Activated CD4-positive, alpha-beta memory T cell treated with anti-CD3 and anti-CD28 coated beads for 36 hours (primary cell): ENCODE measurements at regions of chr9 and their contacts with region 1.

Region 1: DNA sequence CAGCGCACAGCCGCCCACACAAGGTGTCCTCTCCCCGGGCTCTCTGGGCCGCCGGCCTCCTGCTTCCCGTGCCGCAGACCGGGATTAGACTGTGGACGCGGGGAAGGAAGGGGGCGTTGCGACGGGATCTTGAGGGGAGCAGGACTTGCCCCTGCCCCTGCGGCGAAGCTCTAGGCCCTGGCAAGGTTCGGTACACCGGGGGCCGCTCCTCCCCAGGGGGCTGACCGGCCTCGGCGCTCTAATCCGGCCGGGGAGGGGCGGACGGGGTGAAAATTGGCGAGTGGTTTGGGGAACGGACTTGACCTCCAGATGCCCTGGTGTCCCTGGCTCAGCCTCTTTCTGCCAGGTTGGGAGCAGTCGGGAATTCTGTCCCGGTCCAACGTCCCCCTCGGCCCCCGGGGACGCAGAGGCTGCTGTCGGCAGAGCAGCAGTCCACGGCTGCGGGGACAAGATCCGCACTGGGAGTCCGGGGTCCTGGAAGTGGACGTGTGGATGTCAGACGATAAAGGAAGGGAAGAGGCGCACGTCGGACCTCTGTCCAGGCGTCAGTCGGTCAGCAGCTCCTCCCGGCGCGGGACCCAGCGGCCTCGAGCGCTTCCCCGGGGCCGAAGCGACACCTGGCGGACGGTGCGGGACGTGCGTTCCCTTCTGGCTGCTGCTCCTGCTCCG is 1.9 kb upstream of the CNTFR start:
- DNase-seq: peak; percentile 86
- H3K4me3 Mint-ChIP-seq: peak overlapping the region; percentile 53
- H3K27ac Mint-ChIP-seq: no peak overlapping the region
- H3K4me1 Mint-ChIP-seq: peaks cover 25% of the 10 kb centered on the region
- H3K27me3 Mint-ChIP-seq: peaks cover 60% of the 10 kb centered on the region

Region 2: GRCh38 chr9:34267660-34268059 is 323.7 kb before region 1 on chr9:
- CTCF ChIA-PET with region 1: no interaction called
- POLR2A ChIA-PET with region 1: no interaction called
- intact Hi-C with region 1: no loop called
- DNase-seq: no peak
- H3K4me3 Mint-ChIP-seq: no peak overlapping the region
- H3K27ac Mint-ChIP-seq: no peak overlapping the region
- H3K4me1 Mint-ChIP-seq: no peaks in the 10 kb centered on the region
- H3K27me3 Mint-ChIP-seq: no peaks in the 10 kb centered on the region

Region 3: GRCh38 chr9:34522971-34523797 is 68.2 kb before region 1 on chr9 and contains the start of gene ENHO:
- CTCF ChIA-PET with region 1: interaction called, 6 read pairs
- POLR2A ChIA-PET with region 1: interaction called, 3 read pairs
- intact Hi-C with region 1: loop called (anchors 2 kb)
- DNase-seq: peak; percentile 94
- H3K4me3 Mint-ChIP-seq: peak within 1 kb of the TSS; percentile 48
- H3K27ac Mint-ChIP-seq: no peak within 1 kb of the TSS
- H3K4me1 Mint-ChIP-seq: peaks cover 16% of the 10 kb centered on the region
- H3K27me3 Mint-ChIP-seq: peaks cover 5% of the 10 kb centered on the region
- total RNA-seq, gene ENHO: 0.26 to 0.36 TPM

Region 4: DNA sequence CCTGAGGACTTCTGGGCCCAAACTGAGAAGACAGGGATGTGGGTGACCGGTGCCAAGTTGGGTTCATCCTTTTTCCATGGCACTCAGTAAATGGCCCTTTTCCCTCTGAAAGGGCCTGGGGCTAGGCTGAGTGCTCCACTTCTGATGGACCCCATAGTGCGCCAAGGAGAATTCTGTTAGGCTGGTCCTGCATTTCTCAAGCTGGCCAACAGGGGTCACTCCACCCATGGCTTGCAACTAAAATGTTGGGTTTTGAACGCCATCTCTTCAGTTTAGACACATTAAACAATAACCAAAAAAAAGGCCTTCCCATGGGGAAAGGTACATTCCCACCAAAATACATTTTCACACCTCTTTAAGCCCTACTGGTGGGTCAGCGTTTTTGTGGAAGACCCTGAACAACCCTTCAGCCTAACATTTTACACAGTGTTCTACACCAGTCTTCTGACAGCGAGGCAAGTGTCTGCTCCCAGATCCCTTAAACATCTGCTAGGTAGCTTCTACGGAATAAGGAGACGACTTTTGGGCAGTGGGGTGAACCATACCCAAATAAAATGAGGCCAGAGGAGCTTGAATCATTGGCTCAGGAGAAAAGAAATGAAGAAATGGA is 29.1 kb before region 1 on chr9:
- CTCF ChIA-PET with region 1: interaction called, 36 read pairs
- POLR2A ChIA-PET with region 1: no interaction called
- intact Hi-C with region 1: loop called (anchors 1 kb)
- DNase-seq: peak; percentile 49
- H3K4me3 Mint-ChIP-seq: no peak overlapping the region
- H3K27ac Mint-ChIP-seq: no peak overlapping the region
- H3K4me1 Mint-ChIP-seq: no peaks in the 10 kb centered on the region
- H3K27me3 Mint-ChIP-seq: peaks cover 31% of the 10 kb centered on the region

Region 5: GRCh38 chr9:34603610-34604231 is 12.3 kb after region 1 on chr9:
- CTCF ChIA-PET with region 1: interaction called, 32 read pairs
- POLR2A ChIA-PET with region 1: no interaction called
- intact Hi-C with region 1: no loop called
- DNase-seq: peak; percentile 85
- H3K4me3 Mint-ChIP-seq: no peak overlapping the region
- H3K27ac Mint-ChIP-seq: no peak overlapping the region
- H3K4me1 Mint-ChIP-seq: no peaks in the 10 kb centered on the region
- H3K27me3 Mint-ChIP-seq: no peaks in the 10 kb centered on the region